ENCODE measurements at regions of chr14 and their contacts with region 1.

Region 1: GRCh38 chr14:24965934-24966578 is 83.9 kb downstream of the STXBP6 start:
- DNase-seq: peak in 5 of 10 donors; percentile 11 to 47 (median 44)
- H3K4me3 ChIP-seq: no peak overlapping the region
- H3K27ac ChIP-seq: peak overlapping the region in 42 of 59 donors; percentile 7 to 81 (median 51)
- H3K27me3 ChIP-seq: no peaks in the 10 kb centered on the region
- CTCF ChIP-seq: no peak

Region 2: DNA sequence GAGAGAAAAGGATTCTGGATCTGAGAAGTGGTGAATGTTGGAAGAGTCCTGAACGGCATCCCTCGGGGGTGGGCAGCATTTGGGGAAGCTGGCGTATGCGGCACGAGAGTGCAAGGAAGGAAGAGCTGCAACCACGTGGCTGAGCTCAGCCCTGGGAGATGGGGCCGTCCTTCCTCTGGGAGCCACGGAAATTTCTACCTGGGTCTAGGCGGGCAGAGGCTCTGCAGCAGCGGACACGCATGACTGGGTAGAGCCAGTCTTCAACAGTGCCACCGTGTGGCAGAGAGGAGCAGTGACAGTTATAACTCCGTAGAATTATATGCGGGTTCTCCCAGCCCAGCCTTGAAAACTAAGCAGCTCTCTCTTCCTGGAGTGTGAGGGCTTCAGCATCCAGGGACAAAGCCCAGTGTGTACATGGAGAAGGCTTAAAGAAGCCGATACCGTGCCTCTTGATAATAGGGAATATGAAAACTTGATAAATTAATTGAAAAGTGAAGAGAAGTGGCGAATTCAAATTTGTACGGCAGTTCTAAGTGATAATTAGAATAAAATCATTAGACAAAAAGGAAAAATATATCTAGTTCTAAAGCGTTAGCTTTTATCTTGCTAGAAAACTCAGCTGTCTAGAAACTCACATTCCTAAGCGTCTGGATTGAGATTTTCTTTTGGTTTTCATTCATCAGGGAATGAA is 166.8 kb after region 1 on chr14:
- intact Hi-C with region 1: loop called in 1 of 2 experiments (anchors 10 kb)
- DNase-seq: peak; percentile 13 to 79 (median 68)
- H3K4me3 ChIP-seq: peak overlapping the region in 45 of 59 donors; percentile 7 to 62 (median 36)
- H3K27ac ChIP-seq: peak overlapping the region in 3 of 59 donors; percentile 20 to 38 (median 32)
- H3K27me3 ChIP-seq: peaks cover 0 to 9% (median 0%) of the 10 kb centered on the region in 45 donors
- CTCF ChIP-seq: peak; percentile 76 to 96 (median 90)